Endothelial cell of umbilical vein (primary cell): ENCODE measurements at regions of chr1 and their contacts with region 1.

Region 1: DNA sequence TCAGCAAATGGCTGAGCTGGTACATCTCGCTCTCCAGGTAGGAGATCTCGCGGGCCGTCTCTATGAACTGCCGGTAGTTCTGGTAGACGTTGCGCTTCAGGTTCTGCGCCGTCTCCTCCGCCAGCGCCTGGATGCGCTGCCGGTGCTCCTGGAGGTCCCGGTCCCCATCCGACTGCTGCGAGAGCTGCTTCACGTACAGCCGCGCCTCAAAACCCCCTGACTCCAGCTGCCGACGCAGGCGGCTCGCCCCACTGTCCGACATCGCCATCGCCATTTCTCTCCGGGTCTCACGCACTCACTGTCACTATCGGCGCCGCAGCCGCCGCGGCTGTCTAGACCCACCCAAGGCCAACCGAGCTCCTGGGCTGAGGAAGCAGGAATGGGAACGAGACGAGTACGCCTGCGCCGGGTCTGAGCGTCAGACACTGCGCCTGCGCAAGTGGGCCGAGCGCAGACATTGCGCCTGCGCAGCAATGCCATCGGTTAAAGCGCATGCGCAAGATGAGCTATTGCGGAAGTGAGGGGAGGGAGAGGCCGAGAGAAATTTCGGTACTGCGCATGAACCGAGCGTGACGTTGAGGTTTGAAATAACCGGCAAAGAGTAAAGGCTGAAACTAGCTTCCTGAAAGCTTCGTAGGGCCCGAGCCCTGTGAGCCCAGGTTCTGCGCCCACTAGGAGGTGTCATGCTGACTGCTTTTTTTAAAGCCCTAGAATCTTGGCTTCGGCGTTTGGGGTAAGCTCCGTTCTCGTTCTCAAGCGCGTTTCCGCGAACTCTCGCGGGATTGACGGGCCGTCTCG is at the start of gene EXOC8:
- DNase-seq: peak; percentile 100
- H3K4me3 ChIP-seq: peak within 1 kb of the TSS; percentile 36 to 89 (median 70)
- H3K27ac ChIP-seq: peak within 1 kb of the TSS; percentile 90
- H3K4me1 ChIP-seq: peaks cover 47% of the 10 kb centered on the region
- H3K27me3 ChIP-seq: no peaks in the 10 kb centered on the region
- CTCF ChIP-seq: peak in 1 of 2 donors; percentile 4
- POLR2A ChIP-seq: peak; percentile 77
- total RNA-seq, gene EXOC8: 12.6 and 13.2 TPM in 2 replicates

Region 2: GRCh38 chr1:231040019-231040799 is 297.5 kb before region 1 on chr1 and contains the start of gene FAM89A:
- CTCF ChIA-PET with region 1: no interaction called
- POLR2A ChIA-PET with region 1: no interaction called
- dilution Hi-C with region 1: no loop called
- intact Hi-C with region 1: loop called (anchors 10 kb)
- DNase-seq: no peak
- H3K4me3 ChIP-seq: peak within 1 kb of the TSS; percentile 64 to 84 (median 65)
- H3K27ac ChIP-seq: no peak within 1 kb of the TSS
- H3K4me1 ChIP-seq: peaks cover 16% of the 10 kb centered on the region
- H3K27me3 ChIP-seq: peaks cover 11 to 28% of the 10 kb centered on the region in 2 experiments
- CTCF ChIP-seq: no peak
- POLR2A ChIP-seq: no peak
- total RNA-seq, gene FAM89A: 13.6 and 24.0 TPM in 2 replicates

Region 3: GRCh38 chr1:231177936-231178335 is 159.7 kb before region 1 on chr1:
- CTCF ChIA-PET with region 1: no interaction called
- POLR2A ChIA-PET with region 1: no interaction called
- dilution Hi-C with region 1: no loop called
- intact Hi-C with region 1: no loop called
- DNase-seq: no peak
- H3K4me3 ChIP-seq: no peak overlapping the region
- H3K27ac ChIP-seq: no peak overlapping the region
- H3K4me1 ChIP-seq: no peaks in the 10 kb centered on the region
- H3K27me3 ChIP-seq: peaks cover 0 to 12% of the 10 kb centered on the region in 2 experiments
- CTCF ChIP-seq: no peak
- POLR2A ChIP-seq: no peak

Region 4: GRCh38 chr1:231272880-231273279 is 64.8 kb before region 1 on chr1:
- CTCF ChIA-PET with region 1: interaction called, 4 read pairs
- POLR2A ChIA-PET with region 1: no interaction called
- dilution Hi-C with region 1: no loop called
- intact Hi-C with region 1: loop called (anchors 2 kb)
- DNase-seq: peak; percentile 85
- H3K4me3 ChIP-seq: no peak overlapping the region
- H3K27ac ChIP-seq: peak overlapping the region; percentile 74
- H3K4me1 ChIP-seq: peaks cover 21% of the 10 kb centered on the region
- H3K27me3 ChIP-seq: no peaks in the 10 kb centered on the region
- CTCF ChIP-seq: no peak
- POLR2A ChIP-seq: no peak

Region 5: GRCh38 chr1:231351816-231352215 is 14.1 kb after region 1 on chr1:
- CTCF ChIA-PET with region 1: interaction called, 8 read pairs
- POLR2A ChIA-PET with region 1: interaction called, 4 read pairs
- dilution Hi-C with region 1: no loop called
- intact Hi-C with region 1: loop called (anchors 1 kb)
- DNase-seq: peak; percentile 92
- H3K4me3 ChIP-seq: no peak overlapping the region
- H3K27ac ChIP-seq: peak overlapping the region; percentile 81
- H3K4me1 ChIP-seq: peaks cover 18% of the 10 kb centered on the region
- H3K27me3 ChIP-seq: no peaks in the 10 kb centered on the region
- CTCF ChIP-seq: no peak
- POLR2A ChIP-seq: no peak